ENCODE measurements at regions of chrX and their contacts with region 1.

Region 1: GRCh38 chrX:118588715-118589114 is 93.1 kb downstream of the DOCK11 start:
- DNase-seq: no peak
- ATAC-seq: no peak
- H3K4me3 ChIP-seq: no peak overlapping the region
- H3K4me3 Mint-ChIP-seq: no peak overlapping the region
- H3K27ac ChIP-seq: no peak overlapping the region
- H3K27ac Mint-ChIP-seq: peak overlapping the region; percentile 39
- H3K4me1 ChIP-seq: no peaks in the 10 kb centered on the region
- H3K4me1 Mint-ChIP-seq: no peaks in the 10 kb centered on the region
- H3K27me3 ChIP-seq: no peaks in the 10 kb centered on the region
- H3K27me3 Mint-ChIP-seq: no peaks in the 10 kb centered on the region
- CTCF ChIP-seq: no peak

Region 2: DNA sequence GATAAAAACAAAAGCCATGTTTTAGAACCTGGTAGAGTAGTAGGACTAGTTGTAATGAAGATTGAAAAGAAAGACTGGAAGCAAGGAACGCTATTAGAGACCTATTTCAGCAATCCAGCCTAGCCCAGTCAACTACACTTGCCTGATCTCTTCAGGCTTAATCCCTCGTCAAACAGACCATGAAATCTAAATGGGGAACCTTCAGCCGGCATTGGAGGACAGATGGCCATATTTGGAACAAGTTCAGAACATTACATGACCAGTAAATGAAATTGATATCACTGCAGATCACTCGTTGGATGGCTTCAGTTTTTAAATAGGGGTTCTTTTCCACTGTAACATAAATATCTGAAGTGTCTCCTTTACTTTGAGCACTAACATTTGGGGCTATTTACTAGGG is 327.6 kb before region 1 on chrX:
- CTCF ChIA-PET with region 1: no interaction called
- POLR2A ChIA-PET with region 1: no interaction called
- intact Hi-C with region 1: no loop called
- DNase-seq: no peak
- ATAC-seq: no peak
- H3K4me3 ChIP-seq: no peak overlapping the region
- H3K4me3 Mint-ChIP-seq: no peak overlapping the region
- H3K27ac ChIP-seq: no peak overlapping the region
- H3K27ac Mint-ChIP-seq: no peak overlapping the region
- H3K4me1 ChIP-seq: no peaks in the 10 kb centered on the region
- H3K4me1 Mint-ChIP-seq: no peaks in the 10 kb centered on the region
- H3K27me3 ChIP-seq: no peaks in the 10 kb centered on the region
- H3K27me3 Mint-ChIP-seq: peaks cover 3% of the 10 kb centered on the region
- CTCF ChIP-seq: no peak

Region 3: GRCh38 chrX:118644378-118644777 is 55.7 kb after region 1 on chrX:
- CTCF ChIA-PET with region 1: no interaction called
- POLR2A ChIA-PET with region 1: no interaction called
- intact Hi-C with region 1: loop called in 1 of 2 experiments (anchors 10 kb)
- DNase-seq: no peak
- ATAC-seq: no peak
- H3K4me3 ChIP-seq: no peak overlapping the region
- H3K4me3 Mint-ChIP-seq: no peak overlapping the region
- H3K27ac ChIP-seq: no peak overlapping the region
- H3K27ac Mint-ChIP-seq: peak overlapping the region; percentile 66
- H3K4me1 ChIP-seq: no peaks in the 10 kb centered on the region
- H3K4me1 Mint-ChIP-seq: no peaks in the 10 kb centered on the region
- H3K27me3 ChIP-seq: no peaks in the 10 kb centered on the region
- H3K27me3 Mint-ChIP-seq: no peaks in the 10 kb centered on the region
- CTCF ChIP-seq: no peak